ENCODE measurements at regions of chr20 and their contacts with region 1.

Region 1: DNA sequence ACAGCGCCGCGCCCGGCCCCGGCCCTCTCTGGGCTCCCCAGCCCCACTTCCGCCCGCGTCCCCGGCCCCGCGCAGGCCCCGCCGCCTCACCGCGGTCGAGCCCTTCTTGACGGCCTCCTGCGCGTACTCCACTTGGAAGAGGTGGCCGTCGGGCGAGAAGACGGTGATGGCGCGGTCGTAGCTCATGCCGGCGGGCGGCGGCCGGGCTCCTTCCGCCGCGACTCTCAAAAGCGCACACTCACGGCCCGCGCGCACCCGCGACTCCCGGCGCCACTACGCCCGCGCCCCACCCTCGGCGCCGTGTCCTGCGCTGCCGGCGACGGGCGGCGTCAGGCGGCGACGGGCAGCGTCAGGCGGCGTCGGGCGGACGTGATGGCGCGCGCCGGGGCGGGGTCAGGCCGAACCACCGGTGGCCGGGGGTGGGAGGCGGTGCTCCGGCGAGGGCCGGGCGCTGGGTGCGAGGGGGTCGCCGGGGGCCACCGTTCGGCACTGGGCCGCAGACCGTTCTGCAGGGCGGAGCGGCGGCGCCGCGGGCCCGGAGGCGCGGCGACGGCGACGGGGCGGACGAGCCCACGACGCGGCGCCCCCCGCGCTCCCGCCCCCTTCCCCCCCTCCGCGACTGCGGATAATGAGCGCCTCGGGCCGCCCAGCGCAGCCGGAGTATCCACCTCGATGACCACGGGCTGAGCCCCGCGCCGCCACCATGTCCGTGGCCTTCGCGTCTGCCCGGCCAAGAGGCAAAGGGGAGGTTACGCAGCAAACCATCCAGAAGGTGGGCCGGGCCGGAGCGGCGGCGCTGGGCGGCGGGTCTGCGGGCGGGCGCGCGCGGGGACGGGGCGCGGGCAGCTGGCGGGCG is at the starts of genes PSMA7 and SS18L1:
- DNase-seq: peak; percentile 84
- H3K4me3 Mint-ChIP-seq: peak within 1 kb of the TSS; percentile 90
- H3K27ac Mint-ChIP-seq: peak within 1 kb of the TSS; percentile 91
- H3K4me1 Mint-ChIP-seq: peaks cover 39% of the 10 kb centered on the region
- H3K27me3 Mint-ChIP-seq: no peaks in the 10 kb centered on the region
- total RNA-seq, gene PSMA7: 444 and 450 TPM in 2 replicates
- total RNA-seq, gene SS18L1: 24.3 and 29.4 TPM in 2 replicates

Region 2: DNA sequence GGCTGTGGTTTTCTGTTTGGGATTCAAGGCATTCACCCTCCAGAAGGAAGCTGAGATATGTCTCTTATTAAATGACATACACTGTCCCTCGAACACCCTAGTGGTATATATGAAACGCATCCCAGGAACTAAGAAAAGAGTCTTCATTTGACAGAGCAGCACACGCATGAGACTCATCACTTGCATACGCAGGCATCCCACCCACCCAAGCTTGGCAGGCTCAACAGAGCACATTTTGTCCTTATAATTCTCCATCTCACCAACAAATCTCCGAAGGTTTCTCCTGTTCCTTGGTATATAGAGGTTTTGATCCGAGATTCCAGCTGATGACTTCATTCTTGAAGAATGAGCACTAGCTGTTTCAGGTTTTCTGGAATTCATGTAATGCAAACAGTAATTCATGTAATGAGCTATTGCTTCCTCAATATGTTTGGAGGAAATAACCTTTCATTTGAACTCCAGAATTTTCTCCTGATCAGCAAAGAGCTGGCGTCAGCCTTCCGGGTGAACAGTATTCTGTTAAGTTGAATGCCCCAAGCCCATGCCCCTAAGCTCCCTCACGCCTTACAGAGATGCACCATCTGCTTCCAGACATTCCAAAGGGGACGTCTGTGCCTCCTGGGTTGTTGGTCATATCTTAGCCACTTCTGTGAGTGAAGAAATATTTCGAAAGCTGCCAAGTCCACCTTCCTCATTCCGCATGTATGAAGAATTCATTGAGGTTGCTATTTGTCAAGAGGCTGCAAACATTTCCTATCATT is 957.3 kb before region 1 on chr20:
- intact Hi-C with region 1: no loop called
- DNase-seq: no peak
- H3K4me3 Mint-ChIP-seq: no peak overlapping the region
- H3K27ac Mint-ChIP-seq: no peak overlapping the region
- H3K4me1 Mint-ChIP-seq: no peaks in the 10 kb centered on the region
- H3K27me3 Mint-ChIP-seq: no peaks in the 10 kb centered on the region

Region 3: DNA sequence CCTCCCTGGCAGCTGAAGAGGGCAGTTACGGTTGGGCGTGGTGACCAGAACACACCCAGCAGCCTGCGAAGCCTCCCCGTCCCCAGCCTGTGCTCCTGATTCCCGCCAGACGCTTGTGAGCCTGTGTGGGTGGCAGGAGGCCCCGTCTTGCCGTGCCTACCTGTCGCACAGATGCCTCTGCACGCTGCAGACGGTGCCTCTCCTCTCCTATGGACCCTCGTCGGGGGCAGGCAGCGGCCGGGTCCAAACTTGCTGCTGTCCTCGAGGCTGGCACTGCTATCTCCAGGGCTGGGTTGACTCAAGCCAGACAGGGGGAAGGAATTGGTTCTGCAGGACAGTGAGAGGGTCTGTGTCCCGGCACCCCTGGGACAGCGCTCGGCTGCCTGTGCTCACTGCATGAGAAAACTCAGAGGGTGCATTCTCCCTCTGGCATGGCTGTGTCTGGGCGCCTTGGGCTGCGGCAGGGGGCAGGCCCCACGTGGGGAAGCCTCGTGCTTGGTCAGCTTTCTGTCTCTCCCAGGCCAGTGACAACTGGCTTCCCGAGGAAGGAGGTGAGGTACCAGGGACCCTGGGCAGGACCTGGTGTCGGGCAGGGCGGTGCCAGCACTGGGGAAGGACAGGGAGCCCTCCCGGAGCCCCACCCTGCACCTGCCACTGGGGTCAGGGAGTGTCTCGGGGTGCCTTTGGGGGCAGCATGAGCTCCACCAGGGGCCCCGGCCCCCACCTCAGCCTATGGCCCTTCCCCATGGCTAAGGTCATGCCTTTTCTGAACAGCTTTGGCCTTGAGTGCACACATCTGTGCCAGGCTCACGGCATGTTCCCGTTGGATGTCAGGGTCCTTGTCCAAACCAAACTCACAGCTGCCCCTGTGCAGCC is 205.1 kb before region 1 on chr20:
- intact Hi-C with region 1: no loop called
- DNase-seq: no peak
- H3K4me3 Mint-ChIP-seq: no peak overlapping the region
- H3K27ac Mint-ChIP-seq: no peak overlapping the region
- H3K4me1 Mint-ChIP-seq: no peaks in the 10 kb centered on the region
- H3K27me3 Mint-ChIP-seq: no peaks in the 10 kb centered on the region

Region 4: DNA sequence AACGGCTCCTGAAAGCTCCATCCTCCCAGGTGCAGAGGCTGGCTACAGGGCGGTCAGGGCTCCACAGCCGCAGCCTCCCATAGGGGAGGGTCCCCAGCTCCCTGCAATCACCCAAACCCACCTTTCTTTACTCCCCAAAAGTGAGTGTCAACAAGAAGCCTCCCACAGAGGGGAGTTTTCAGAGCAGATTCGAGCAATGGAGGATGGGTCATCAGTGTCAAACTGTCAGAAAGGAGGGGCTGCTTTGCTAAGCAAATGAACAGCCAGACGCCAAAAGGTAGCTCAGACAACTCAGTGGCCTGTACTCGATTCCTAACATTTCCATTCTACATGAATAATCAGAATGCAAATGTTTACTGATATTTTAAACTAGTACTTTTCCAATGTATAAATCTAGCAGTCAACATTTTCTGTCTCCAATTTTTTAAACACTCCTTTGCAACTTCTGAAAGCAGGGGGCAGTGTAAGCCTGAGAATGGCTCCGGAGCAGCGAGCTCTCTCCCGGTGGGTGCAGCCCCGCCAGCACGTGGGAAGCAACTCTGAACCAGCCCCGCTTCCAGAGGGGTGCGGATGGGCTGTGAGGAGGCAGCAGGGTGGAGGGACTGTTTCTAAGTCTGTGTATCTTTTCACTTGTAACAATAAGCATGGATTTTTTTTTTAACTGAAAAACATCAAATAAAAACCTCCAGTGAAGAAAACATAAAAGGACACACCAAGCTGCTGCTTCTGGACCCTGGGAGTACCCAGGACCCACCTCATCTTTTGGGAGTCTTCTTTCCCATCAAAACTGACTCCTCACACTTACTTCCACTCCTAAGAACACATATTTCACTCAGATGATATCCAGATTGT is 132.6 kb before region 1 on chr20:
- intact Hi-C with region 1: loop called (anchors 1 kb)
- DNase-seq: peak; percentile 34
- H3K4me3 Mint-ChIP-seq: no peak overlapping the region
- H3K27ac Mint-ChIP-seq: no peak overlapping the region
- H3K4me1 Mint-ChIP-seq: peaks cover 8% of the 10 kb centered on the region
- H3K27me3 Mint-ChIP-seq: no peaks in the 10 kb centered on the region

Region 5: GRCh38 chr20:62065669-62066338 is 77.5 kb before region 1 on chr20 and contains the start of gene TAF4:
- intact Hi-C with region 1: loop called (anchors 2 kb)
- DNase-seq: peak; percentile 80
- H3K4me3 Mint-ChIP-seq: peak within 1 kb of the TSS; percentile 84
- H3K27ac Mint-ChIP-seq: peak within 1 kb of the TSS; percentile 84
- H3K4me1 Mint-ChIP-seq: peaks cover 42% of the 10 kb centered on the region
- H3K27me3 Mint-ChIP-seq: peaks cover 6% of the 10 kb centered on the region
- total RNA-seq, gene TAF4: 26.3 and 28.3 TPM in 2 replicates

Region 6: DNA sequence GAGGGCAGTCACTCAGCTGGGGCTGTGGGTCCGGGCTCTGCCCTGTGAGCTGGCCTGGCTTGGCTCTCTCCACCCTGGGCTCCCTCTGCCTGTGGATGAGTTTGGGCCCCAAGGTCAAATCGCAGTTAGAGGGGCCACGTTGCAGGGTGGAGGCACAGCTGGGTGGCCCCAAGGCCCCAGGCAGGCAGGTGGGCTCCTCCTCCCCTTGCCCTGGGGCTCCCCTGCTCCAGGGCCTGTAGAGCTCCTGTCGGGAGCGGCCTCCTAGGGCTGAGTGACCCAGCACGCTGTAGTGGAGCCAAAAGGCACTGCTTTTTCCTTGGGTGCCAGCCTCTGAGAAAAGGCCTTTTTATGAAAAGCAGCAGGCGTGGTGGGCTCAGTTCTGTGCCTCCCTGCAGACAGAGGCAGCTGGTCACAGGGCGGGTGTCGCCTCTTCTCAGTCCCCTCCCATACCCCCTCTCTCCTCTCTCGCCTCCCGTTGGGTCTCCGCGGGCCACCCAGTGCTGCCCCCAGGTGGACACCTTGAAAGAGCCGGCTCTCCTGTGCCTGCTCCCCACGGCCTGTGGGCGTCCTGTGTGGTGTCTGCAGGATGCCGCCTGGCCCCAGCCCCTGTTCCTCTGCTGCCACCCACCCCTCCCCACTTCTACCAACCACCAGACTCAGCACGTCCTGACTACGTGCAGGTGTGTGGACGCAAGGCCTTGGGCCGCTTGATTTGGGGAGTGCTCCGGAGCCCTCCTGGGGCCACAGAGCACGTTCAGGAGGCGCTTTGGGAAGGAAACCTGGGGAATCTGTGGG is 13.4 kb after region 1 on chr20:
- intact Hi-C with region 1: loop called (anchors 2 kb)
- DNase-seq: peak; percentile 61
- H3K4me3 Mint-ChIP-seq: no peak overlapping the region
- H3K27ac Mint-ChIP-seq: no peak overlapping the region
- H3K4me1 Mint-ChIP-seq: peaks cover 19% of the 10 kb centered on the region
- H3K27me3 Mint-ChIP-seq: peaks cover 2% of the 10 kb centered on the region

Region 7: DNA sequence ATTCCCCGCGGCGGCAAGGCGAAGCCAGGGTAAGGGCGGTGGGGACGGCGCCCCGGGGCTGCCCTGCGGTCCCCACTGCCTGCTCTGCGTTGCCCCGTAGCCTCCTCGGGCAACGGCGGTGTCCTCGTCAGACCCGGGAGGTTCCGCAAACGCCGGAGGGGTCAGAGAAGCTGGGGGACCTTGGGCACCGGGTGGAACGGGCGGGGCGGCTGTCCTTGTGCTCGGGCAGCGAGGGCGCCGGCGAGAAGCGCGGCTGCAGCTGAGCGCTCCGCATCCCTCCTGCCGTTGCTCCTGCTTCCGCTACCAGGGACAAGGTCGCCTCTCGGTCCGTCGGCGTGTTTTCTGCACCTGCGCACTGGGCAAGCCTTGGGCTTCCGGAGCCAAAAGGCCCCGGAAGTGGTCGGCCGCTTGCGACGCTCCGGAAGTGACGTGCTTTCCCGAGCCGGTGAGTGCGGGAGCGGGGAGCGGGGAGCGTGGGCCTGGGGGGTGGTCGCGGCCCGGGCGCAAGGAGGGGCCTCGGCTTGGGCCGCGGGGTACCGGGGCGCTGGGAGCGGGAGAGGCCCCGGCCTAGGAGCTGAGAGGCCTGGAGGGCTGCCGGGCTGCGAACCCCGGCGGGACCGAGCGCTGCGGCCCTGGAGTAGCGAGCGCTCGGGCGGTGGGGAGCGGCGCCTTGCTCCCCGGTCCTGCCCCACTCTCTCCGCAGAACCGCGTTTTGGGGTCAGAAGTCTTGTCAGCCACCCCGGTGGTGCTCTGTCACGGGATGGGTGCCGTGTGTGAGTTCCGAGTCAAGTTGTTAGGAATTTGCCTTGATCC is 39.5 kb after region 1 on chr20 and contains the start of gene MTG2:
- intact Hi-C with region 1: loop called (anchors 1 kb)
- DNase-seq: peak; percentile 95
- H3K4me3 Mint-ChIP-seq: peak within 1 kb of the TSS; percentile 92
- H3K27ac Mint-ChIP-seq: peak within 1 kb of the TSS; percentile 93
- H3K4me1 Mint-ChIP-seq: peaks cover 39% of the 10 kb centered on the region
- H3K27me3 Mint-ChIP-seq: no peaks in the 10 kb centered on the region
- total RNA-seq, gene MTG2: 45.4 and 46.3 TPM in 2 replicates